Heart left ventricle (tissue), 16 donors: ENCODE measurements at regions of chr11 and their contacts with region 1.

Region 1: DNA sequence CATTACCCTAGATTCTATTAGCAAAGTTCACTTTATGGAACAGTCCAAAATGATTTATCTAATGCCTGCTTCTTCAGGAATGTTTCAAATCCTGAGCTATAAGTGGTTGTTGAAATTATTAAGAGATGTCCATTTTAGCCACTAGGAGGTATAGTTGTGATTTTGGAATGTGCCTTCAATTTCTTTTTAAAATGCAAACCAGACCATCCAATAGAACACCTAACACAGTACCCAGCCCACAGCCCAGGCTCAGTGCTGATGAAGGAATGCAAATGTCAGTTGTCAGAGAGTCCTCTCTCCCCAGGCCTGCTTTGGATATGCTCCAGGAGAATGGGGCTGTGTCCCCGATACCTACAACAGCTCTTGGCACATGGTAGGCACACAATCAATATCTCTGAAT is 85.8 kb upstream of the E2F8 start:
- DNase-seq: no peak
- ATAC-seq: no peak
- H3K4me3 ChIP-seq: no peak overlapping the region
- H3K27ac ChIP-seq: no peak overlapping the region
- H3K4me1 ChIP-seq: peaks cover 0 to under 1% (median 0%) of the 10 kb centered on the region in 12 donors
- H3K27me3 ChIP-seq: peaks cover 0 to 5% (median 0%) of the 10 kb centered on the region in 9 donors
- CTCF ChIP-seq: peak in 7 of 12 donors; percentile 9 to 47 (median 25)
- POLR2A ChIP-seq: no peak

Region 2: GRCh38 chr11:18492888-18493287 is 833.6 kb before region 1 on chr11:
- intact Hi-C with region 1: no loop called
- DNase-seq: no peak
- ATAC-seq: no peak
- H3K4me3 ChIP-seq: no peak overlapping the region
- H3K27ac ChIP-seq: no peak overlapping the region
- H3K4me1 ChIP-seq: peaks cover 0 to 4% (median 0%) of the 10 kb centered on the region in 12 donors
- H3K27me3 ChIP-seq: no peaks in the 10 kb centered on the region
- CTCF ChIP-seq: no peak
- POLR2A ChIP-seq: no peak

Region 3: DNA sequence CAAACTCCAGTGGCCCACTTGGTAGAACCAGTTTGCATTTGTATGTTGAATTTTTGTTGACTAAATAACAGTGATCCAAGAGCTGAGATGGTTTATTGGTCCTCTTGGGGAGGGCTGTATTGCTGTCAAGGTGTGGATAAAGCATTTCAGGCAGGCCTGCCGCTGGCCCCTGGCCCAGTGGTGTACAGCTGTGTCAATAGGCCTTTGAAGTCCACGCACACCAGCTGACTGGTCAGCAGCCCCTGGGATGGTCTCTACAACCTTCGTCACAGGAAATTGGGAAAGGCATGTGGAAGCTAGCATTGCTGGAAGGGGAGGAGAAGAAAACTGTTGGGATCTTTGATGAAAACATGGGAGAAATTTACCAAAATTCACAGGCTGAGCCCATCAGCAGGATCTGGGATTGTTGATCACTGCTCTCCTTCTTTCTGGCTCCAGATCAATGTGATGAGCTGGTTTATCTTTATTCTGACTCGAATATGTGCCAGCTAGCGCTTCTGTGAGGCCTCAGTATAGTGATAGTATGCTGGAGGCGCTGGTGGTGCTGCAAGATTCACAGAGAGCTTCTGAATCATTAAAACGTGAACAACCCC is 73.2 kb before region 1 on chr11:
- intact Hi-C with region 1: no loop called
- DNase-seq: no peak
- ATAC-seq: no peak
- H3K4me3 ChIP-seq: no peak overlapping the region
- H3K27ac ChIP-seq: no peak overlapping the region
- H3K4me1 ChIP-seq: no peaks in the 10 kb centered on the region
- H3K27me3 ChIP-seq: no peaks in the 10 kb centered on the region
- CTCF ChIP-seq: no peak
- POLR2A ChIP-seq: no peak

Region 4: DNA sequence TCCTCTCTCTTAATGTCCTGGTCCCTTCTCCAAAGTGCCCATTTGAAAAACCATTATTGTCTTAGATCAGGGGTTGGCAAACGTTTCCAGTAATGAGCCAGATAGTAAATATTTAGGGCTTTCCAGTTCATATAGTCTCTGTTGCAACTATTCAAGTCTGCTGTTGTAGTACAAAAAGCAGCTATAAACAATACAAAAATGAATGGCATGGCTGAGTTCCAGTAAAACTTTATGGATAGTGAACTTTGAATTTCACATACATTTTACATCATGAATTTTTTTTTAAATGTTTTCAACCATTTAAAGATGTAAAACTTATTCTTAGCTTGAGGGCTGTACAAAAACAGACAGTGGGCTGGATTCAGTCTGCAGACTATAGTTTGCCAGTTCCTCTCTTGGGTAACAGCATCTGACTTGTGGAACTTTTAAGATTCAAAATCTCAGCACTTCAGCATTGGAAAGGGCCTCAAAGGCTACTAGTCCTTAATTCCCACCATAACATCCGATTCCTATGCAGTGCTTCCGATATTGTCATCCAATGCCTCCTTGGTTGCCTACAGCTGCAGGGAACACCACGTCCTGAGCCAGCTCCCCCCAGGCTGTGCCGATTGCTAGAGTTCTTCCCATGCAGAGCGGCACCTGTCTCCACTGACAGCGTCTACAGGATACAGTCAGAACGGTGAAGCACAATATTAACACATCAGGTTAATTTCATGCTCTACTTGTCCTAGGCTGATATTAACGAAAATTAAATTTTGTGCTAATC is 20.1 kb before region 1 on chr11:
- intact Hi-C with region 1: loop called in 1 of 10 experiments (anchors 2 kb)
- DNase-seq: no peak
- ATAC-seq: no peak
- H3K4me3 ChIP-seq: no peak overlapping the region
- H3K27ac ChIP-seq: no peak overlapping the region
- H3K4me1 ChIP-seq: peaks cover 0 to 2% (median 0%) of the 10 kb centered on the region in 12 donors
- H3K27me3 ChIP-seq: no peaks in the 10 kb centered on the region
- CTCF ChIP-seq: no peak
- POLR2A ChIP-seq: no peak

Region 5: GRCh38 chr11:19546325-19546724 is 219.8 kb after region 1 on chr11:
- intact Hi-C with region 1: loop called in 4 of 10 experiments (anchors 5 kb)
- DNase-seq: no peak
- ATAC-seq: no peak
- H3K4me3 ChIP-seq: no peak overlapping the region
- H3K27ac ChIP-seq: no peak overlapping the region
- H3K4me1 ChIP-seq: no peaks in the 10 kb centered on the region
- H3K27me3 ChIP-seq: no peaks in the 10 kb centered on the region
- CTCF ChIP-seq: no peak
- POLR2A ChIP-seq: no peak